Activated CD4-positive, alpha-beta memory T cell treated with anti-CD3 and anti-CD28 coated beads, Interleukin-2, amount 10 ng/mL, durations not matched to agents 7 days and 5 days (primary cell): ENCODE measurements at regions of chr7 and their contacts with region 1.

Region 1: DNA sequence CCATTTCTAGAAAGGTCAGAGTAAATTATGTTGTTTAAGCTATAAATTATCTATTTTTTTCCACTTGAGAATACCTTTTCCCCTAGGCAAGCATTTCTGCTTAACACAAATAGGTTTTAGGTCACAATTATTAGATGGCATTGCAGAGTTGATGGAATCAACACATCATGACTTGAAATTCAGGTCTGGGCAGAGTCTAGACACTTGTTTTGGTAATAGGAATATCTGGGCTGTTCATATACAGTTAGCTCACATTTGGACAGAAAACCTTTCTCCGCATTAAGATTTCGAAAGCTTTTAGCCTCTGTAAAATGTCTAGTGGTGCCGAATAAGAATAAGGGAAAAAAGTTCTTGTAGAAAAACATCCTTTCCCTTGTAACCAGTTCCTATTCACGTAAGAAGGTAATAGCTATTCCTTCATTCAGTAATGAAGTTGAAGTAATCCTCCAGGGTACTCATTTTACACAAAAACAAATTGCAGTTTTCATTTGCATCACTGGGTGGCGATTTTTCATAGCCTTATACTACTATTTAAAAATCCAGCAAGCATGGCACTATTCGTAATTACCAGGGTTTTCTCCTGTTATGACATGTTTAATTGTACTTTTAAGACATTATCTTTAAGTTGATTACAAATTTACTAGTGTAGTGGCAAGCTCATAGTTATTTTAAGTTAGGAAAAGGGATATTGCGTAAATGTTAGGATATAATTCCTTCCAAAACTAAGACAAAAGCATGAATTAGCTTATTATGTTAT is 37.0 kb downstream of the RPA3 start:
- DNase-seq: peak; percentile 26
- H3K4me3 Mint-ChIP-seq: no peak overlapping the region
- H3K27ac Mint-ChIP-seq: no peak overlapping the region
- H3K4me1 Mint-ChIP-seq: peaks cover 21% of the 10 kb centered on the region
- H3K27me3 Mint-ChIP-seq: no peaks in the 10 kb centered on the region

Region 2: GRCh38 chr7:7640221-7641128 is 40.9 kb before region 1 on chr7 and contains the start of gene UMAD1:
- CTCF ChIA-PET with region 1: interaction called, 7 read pairs
- POLR2A ChIA-PET with region 1: interaction called, 16 read pairs
- DNase-seq: peak; percentile 99
- H3K4me3 Mint-ChIP-seq: peak within 1 kb of the TSS; percentile 90
- H3K27ac Mint-ChIP-seq: peak within 1 kb of the TSS; percentile 90
- H3K4me1 Mint-ChIP-seq: peaks cover 36% of the 10 kb centered on the region
- H3K27me3 Mint-ChIP-seq: no peaks in the 10 kb centered on the region
- total RNA-seq, gene UMAD1: 16.1 to 16.7 TPM

Region 3: DNA sequence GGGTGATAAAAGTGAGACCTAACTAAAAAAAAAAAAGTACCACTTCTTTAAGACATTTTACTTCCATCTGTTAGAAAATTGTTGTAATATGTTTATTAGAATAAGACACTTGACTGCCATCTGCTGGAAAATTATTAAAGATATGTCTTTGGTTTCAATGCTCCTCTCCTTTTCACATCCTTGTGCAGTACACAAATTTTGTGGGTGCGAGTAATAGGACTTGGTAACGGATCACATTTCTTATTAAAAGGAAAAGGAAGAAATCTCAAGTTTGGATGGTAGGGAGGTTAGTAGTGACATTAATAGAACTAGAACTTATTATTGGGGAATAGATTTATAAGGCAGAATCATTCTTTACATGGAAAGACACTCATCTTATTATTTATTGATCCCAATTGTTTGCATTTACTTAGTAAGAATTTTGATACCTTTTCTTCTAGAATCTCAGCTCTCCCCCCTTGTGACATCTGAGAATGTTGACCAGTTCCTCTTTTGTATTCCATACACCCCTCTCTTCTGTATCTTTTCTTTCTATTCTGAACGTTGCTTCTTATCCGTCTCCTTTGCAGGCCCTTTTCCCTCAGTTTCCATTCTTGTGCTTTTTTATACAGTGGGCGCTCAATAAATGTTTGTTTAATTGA is 80.1 kb after region 1 on chr7:
- CTCF ChIA-PET with region 1: interaction called, 34 read pairs
- POLR2A ChIA-PET with region 1: no interaction called
- DNase-seq: no peak
- H3K4me3 Mint-ChIP-seq: peak overlapping the region; percentile 90
- H3K27ac Mint-ChIP-seq: peak overlapping the region; percentile 91
- H3K4me1 Mint-ChIP-seq: peaks cover 38% of the 10 kb centered on the region
- H3K27me3 Mint-ChIP-seq: no peaks in the 10 kb centered on the region

Region 4: GRCh38 chr7:7789551-7789988 is 108.2 kb after region 1 on chr7:
- CTCF ChIA-PET with region 1: no interaction called
- POLR2A ChIA-PET with region 1: no interaction called
- DNase-seq: no peak
- H3K4me3 Mint-ChIP-seq: no peak overlapping the region
- H3K27ac Mint-ChIP-seq: no peak overlapping the region
- H3K4me1 Mint-ChIP-seq: peaks cover 12% of the 10 kb centered on the region
- H3K27me3 Mint-ChIP-seq: no peaks in the 10 kb centered on the region

Region 5: DNA sequence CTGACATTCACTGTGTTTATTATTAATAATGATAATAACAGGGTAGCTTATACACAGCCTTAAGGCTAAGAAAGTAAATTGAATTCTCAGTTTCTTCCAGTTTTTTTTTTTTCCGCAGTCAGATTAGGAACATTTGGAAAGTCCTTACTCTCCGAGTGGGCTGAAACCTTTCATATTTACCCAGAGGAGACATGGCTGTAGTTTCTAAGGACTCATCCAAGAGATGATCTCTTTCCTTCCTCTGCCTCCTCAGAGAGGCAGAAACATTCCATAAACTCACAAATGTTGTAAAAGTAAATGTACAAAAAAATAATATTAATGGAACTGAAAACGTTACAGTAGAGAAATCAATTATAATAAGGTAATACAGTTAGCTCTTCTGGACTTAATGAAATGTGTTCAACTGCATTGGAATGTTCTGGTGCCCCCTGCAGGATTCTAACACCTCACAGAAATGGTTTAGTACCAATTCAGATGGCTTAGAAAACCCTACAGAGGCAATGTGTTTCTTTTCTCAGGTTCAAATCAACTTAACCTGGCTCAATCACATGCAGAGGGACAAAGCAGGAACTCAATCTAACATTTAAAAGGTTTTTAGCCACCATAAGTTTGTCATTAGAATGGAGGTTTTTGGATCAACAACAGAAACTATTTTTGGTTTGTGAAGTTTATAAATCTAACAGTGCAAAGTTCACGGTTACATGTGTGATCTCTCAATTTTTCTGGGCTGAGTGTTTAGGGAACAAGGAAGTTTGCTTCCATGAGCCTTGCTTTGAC is 508.9 kb after region 1 on chr7:
- CTCF ChIA-PET with region 1: interaction called, 17 read pairs
- POLR2A ChIA-PET with region 1: no interaction called
- DNase-seq: peak; percentile 69
- H3K4me3 Mint-ChIP-seq: no peak overlapping the region
- H3K27ac Mint-ChIP-seq: no peak overlapping the region
- H3K4me1 Mint-ChIP-seq: peaks cover 30% of the 10 kb centered on the region
- H3K27me3 Mint-ChIP-seq: peaks cover 3% of the 10 kb centered on the region

Region 6: DNA sequence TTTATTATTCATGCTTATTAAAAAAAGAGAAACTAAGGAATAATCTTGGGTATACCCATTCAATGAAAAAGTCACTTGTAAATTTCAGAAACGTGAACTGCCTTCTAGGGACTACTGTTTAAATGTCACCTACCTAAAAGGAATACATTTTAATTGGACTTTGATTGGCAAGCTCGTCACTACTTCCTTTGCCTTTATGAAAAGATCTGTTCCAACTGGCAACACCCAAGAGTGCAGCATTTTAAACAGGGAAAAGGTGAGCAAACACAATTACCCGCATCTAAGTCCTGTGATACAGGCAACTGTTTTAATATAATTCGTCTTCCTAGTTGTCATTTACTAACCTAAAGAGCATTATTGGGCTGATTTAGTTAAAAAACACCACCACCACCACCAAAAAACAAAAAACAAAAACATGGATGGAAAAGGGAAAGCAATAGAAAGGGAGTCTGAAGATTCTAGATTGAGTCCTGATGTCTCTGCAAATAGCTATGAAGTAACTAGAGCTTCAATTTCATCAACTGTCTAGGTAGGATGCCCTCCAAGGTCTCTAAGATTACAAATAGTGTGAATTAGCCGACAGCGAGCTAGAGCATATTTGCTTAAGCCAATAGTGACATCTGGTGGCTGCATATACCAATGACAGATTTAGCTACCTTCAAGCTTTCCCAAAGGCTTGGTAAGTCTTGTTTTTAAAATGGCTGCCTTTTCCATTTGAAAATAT is 614.4 kb after region 1 on chr7:
- CTCF ChIA-PET with region 1: interaction called, 15 read pairs
- POLR2A ChIA-PET with region 1: no interaction called
- DNase-seq: peak; percentile 24
- H3K4me3 Mint-ChIP-seq: no peak overlapping the region
- H3K27ac Mint-ChIP-seq: no peak overlapping the region
- H3K4me1 Mint-ChIP-seq: peaks cover 2% of the 10 kb centered on the region
- H3K27me3 Mint-ChIP-seq: peaks cover 15% of the 10 kb centered on the region